Activated CD4-positive, alpha-beta T cell treated with anti-CD3 and anti-CD28 coated beads, Interleukin-2, amount 10 ng/mL, durations not matched to agents 24 days and 14 days (primary cell): ENCODE measurements at regions of chr12 and their contacts with region 1.

Region 1: GRCh38 chr12:120012067-120012621 is 23.1 kb downstream of the BICDL1 start:
- DNase-seq: peak; percentile 95
- H3K4me3 Mint-ChIP-seq: peak overlapping the region; percentile 75
- H3K27ac Mint-ChIP-seq: peak overlapping the region; percentile 96
- H3K4me1 Mint-ChIP-seq: peaks cover 70% of the 10 kb centered on the region
- H3K27me3 Mint-ChIP-seq: no peaks in the 10 kb centered on the region

Region 2: GRCh38 chr12:119980242-119980641 is 31.9 kb before region 1 on chr12:
- intact Hi-C with region 1: loop called (anchors 1 kb)
- DNase-seq: peak; percentile 61
- H3K4me3 Mint-ChIP-seq: peak overlapping the region; percentile 42
- H3K27ac Mint-ChIP-seq: peak overlapping the region; percentile 90
- H3K4me1 Mint-ChIP-seq: peaks cover 12% of the 10 kb centered on the region
- H3K27me3 Mint-ChIP-seq: peaks cover 12% of the 10 kb centered on the region

Region 3: GRCh38 chr12:119988782-119989668 is 23.1 kb before region 1 on chr12 and contains the start of gene BICDL1:
- intact Hi-C with region 1: loop called (anchors 1 kb)
- DNase-seq: peak; percentile 99
- H3K4me3 Mint-ChIP-seq: peak within 1 kb of the TSS; percentile 93
- H3K27ac Mint-ChIP-seq: peak within 1 kb of the TSS; percentile 96
- H3K4me1 Mint-ChIP-seq: peaks cover 35% of the 10 kb centered on the region
- H3K27me3 Mint-ChIP-seq: peaks cover 4% of the 10 kb centered on the region
- total RNA-seq, gene BICDL1: 148 and 154 TPM in 2 replicates

Region 4: GRCh38 chr12:120032242-120032641 is 20.1 kb after region 1 on chr12:
- intact Hi-C with region 1: loop called (anchors 1 kb)
- DNase-seq: no peak
- H3K4me3 Mint-ChIP-seq: peak overlapping the region; percentile 17
- H3K27ac Mint-ChIP-seq: peak overlapping the region; percentile 67
- H3K4me1 Mint-ChIP-seq: peaks cover 15% of the 10 kb centered on the region
- H3K27me3 Mint-ChIP-seq: no peaks in the 10 kb centered on the region

Region 5: GRCh38 chr12:120116792-120117651 is 104.9 kb after region 1 on chr12:
- intact Hi-C with region 1: loop called (anchors 1 kb)
- DNase-seq: peak; percentile 100
- H3K4me3 Mint-ChIP-seq: peak overlapping the region; percentile 90
- H3K27ac Mint-ChIP-seq: peak overlapping the region; percentile 92
- H3K4me1 Mint-ChIP-seq: peaks cover 72% of the 10 kb centered on the region
- H3K27me3 Mint-ChIP-seq: no peaks in the 10 kb centered on the region